GM18951 (cell line): ENCODE measurements at regions of chr13 and their contacts with region 1.

Region 1: GRCh38 chr13:25169356-25169755 is 2.7 kb downstream of the AMER2 start:
- POLR2A ChIP-seq: no peak

Region 2: GRCh38 chr13:24709186-24709913 is 460.0 kb before region 1 on chr13:
- in situ Hi-C with region 1: no loop called
- POLR2A ChIP-seq: no peak

Region 3: DNA sequence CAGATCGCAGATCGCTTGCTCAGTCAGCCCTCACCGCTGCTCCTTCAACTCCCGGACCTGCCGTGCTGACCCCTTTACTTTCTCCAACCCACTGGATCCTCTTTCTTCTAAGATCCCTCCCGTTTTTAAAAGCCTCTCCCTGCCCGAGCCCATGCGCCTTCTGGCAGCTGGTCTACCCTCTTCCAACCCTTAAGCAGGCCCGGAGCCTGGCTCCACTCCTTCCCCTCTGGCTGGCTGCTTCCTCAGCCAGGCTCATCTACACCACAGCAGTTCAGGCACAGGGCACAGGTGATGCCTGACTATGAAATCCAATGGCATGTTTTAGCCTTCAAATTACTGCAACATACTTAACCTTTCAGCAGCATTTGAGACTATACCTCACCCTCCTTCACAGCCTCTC is 137.2 kb before region 1 on chr13:
- in situ Hi-C with region 1: loop called (anchors 5 kb)
- POLR2A ChIP-seq: no peak

Region 4: GRCh38 chr13:25319771-25320170 is 150.4 kb after region 1 on chr13:
- in situ Hi-C with region 1: no loop called
- POLR2A ChIP-seq: no peak

Region 5: DNA sequence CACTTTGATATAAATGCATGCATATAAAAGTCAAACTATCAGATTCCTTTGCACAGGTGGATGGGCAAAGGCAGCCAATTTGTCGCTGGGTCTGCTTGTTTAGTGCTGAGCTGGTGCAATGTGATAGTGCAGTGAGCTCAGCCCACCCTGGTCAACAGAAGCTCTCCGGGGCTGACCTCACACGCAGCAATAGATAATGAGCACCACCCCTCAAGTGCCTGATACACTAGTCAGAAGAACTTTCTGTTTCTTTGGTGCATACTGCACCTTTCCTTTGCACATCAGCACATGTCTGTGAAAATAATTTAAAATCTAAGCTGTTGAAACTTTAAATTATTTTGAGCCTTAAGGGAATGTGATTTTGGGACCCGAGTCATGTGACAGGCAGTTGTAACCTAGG is 222.6 kb after region 1 on chr13:
- in situ Hi-C with region 1: no loop called
- POLR2A ChIP-seq: no peak